CD14-positive monocyte (primary cell): ENCODE measurements at regions of chr7 and their contacts with region 1.

Region 1: GRCh38 chr7:139645572-139646523 is 122.4 kb downstream of the CLEC2L start:
- DNase-seq: peak; percentile 73 to 88 (median 85)
- H3K4me3 ChIP-seq: no peak overlapping the region
- H3K4me3 Mint-ChIP-seq: peak overlapping the region in 1 of 2 donors; percentile 35
- H3K27ac ChIP-seq: peak overlapping the region in 1 of 2 donors; percentile 12
- H3K27ac Mint-ChIP-seq: peak overlapping the region in 3 of 7 donors; percentile 15 to 78 (median 23)
- H3K4me1 ChIP-seq: peaks cover 55 to 61% of the 10 kb centered on the region in 2 donors
- H3K4me1 Mint-ChIP-seq: peaks cover 64% of the 10 kb centered on the region
- H3K27me3 ChIP-seq: no peaks in the 10 kb centered on the region
- H3K27me3 Mint-ChIP-seq: peaks cover 0 to 3% (median 0%) of the 10 kb centered on the region in 3 donors
- CTCF ChIP-seq: peak; percentile 92

Region 2: GRCh38 chr7:138935465-138936011 is 710.3 kb before region 1 on chr7:
- intact Hi-C with region 1: no loop called
- DNase-seq: no peak
- H3K4me3 ChIP-seq: no peak overlapping the region
- H3K4me3 Mint-ChIP-seq: no peak overlapping the region
- H3K27ac ChIP-seq: no peak overlapping the region
- H3K27ac Mint-ChIP-seq: no peak overlapping the region
- H3K4me1 ChIP-seq: no peaks in the 10 kb centered on the region
- H3K4me1 Mint-ChIP-seq: no peaks in the 10 kb centered on the region
- H3K27me3 ChIP-seq: no peaks in the 10 kb centered on the region
- H3K27me3 Mint-ChIP-seq: peaks cover 0 to 2% (median 1%) of the 10 kb centered on the region in 3 donors
- CTCF ChIP-seq: no peak

Region 3: DNA sequence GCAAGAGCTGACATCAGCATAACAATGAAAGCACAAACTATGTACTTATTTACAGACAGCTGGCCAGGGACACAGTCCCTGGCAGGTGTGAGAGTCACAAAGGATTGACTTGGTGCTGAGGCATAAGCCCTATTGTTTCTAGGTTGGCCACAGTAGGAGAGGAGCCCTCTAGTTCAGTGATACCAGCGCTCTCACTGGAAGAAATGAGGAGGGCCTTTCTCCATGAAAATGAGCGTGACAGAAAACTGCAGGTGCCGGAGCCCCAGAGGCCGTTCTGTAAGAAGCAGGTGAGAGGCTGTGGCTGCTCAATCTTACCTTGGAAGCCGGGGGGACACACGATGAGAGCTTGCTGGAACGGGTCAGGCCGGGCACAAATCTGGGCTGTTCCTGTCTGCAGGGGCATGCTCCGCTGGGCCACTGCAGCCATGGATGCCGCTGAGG is 31.9 kb before region 1 on chr7:
- intact Hi-C with region 1: no loop called
- DNase-seq: no peak
- H3K4me3 ChIP-seq: no peak overlapping the region
- H3K4me3 Mint-ChIP-seq: no peak overlapping the region
- H3K27ac ChIP-seq: no peak overlapping the region
- H3K27ac Mint-ChIP-seq: no peak overlapping the region
- H3K4me1 ChIP-seq: no peaks in the 10 kb centered on the region
- H3K4me1 Mint-ChIP-seq: no peaks in the 10 kb centered on the region
- H3K27me3 ChIP-seq: no peaks in the 10 kb centered on the region
- H3K27me3 Mint-ChIP-seq: no peaks in the 10 kb centered on the region
- CTCF ChIP-seq: no peak

Region 4: GRCh38 chr7:139702811-139703486 is 57.1 kb after region 1 on chr7:
- intact Hi-C with region 1: loop called in 1 of 2 experiments (anchors 10 kb)
- DNase-seq: peak; percentile 40 to 50 (median 42)
- H3K4me3 ChIP-seq: no peak overlapping the region
- H3K4me3 Mint-ChIP-seq: peak overlapping the region in 1 of 2 donors; percentile 18
- H3K27ac ChIP-seq: peak overlapping the region in 1 of 2 donors; percentile 54
- H3K27ac Mint-ChIP-seq: peak overlapping the region in 6 of 7 donors; percentile 44 to 75 (median 65)
- H3K4me1 ChIP-seq: peaks cover 10 to 34% of the 10 kb centered on the region in 2 donors
- H3K4me1 Mint-ChIP-seq: peaks cover 18% of the 10 kb centered on the region
- H3K27me3 ChIP-seq: no peaks in the 10 kb centered on the region
- H3K27me3 Mint-ChIP-seq: peaks cover 0 to 5% (median 3%) of the 10 kb centered on the region in 3 donors
- CTCF ChIP-seq: peak; percentile 30

Region 5: DNA sequence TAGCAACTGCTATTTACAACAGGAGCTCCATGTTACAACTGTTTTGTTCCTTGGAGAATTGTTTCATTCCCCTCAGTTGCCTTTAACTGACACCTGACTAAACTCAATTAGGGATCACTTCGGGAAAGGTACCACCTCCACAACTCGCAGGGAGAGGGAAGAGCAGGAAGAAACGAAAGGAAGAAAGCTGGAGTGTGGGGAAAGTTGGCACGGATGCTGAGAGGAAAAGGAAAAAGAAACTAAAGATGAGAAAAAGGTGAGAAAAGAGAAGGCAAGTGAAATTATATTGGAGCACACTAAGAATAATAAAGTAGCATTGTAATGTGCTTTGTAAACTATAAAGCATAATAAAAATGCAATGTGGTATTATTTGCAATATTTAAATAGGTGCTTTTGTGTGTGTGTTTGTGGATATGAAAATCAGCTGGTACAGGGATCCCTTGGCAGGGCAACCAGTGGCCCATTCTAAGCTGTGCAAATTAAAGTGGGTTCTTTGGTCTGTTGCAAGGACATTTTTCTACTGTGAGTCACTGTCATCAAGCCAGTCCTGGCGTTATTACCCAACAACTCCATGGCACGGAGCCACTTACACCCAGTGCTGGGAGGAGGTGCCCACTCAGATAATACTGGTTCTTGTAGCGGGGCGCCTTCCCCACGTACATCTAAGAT is 86.1 kb after region 1 on chr7:
- intact Hi-C with region 1: loop called (anchors 5 to 10 kb)
- DNase-seq: peak; percentile 93 to 97 (median 94)
- H3K4me3 ChIP-seq: peak overlapping the region in 1 of 3 experiments; percentile 38
- H3K4me3 Mint-ChIP-seq: peak overlapping the region; percentile 63 to 72
- H3K27ac ChIP-seq: peak overlapping the region; percentile 88 to 93
- H3K27ac Mint-ChIP-seq: peak overlapping the region; percentile 89 to 100 (median 99)
- H3K4me1 ChIP-seq: peaks cover 64 to 81% of the 10 kb centered on the region in 2 donors
- H3K4me1 Mint-ChIP-seq: peaks cover 81% of the 10 kb centered on the region
- H3K27me3 ChIP-seq: no peaks in the 10 kb centered on the region
- H3K27me3 Mint-ChIP-seq: peaks cover 0 to 3% (median 0%) of the 10 kb centered on the region in 3 donors
- CTCF ChIP-seq: no peak

Region 6: GRCh38 chr7:139777948-139778841 is 132.3 kb after region 1 on chr7 and contains the start of gene HIPK2:
- intact Hi-C with region 1: loop called (anchors 5 kb)
- DNase-seq: peak; percentile 32 to 46 (median 42)
- H3K4me3 ChIP-seq: peak within 1 kb of the TSS; percentile 77 to 90 (median 89)
- H3K4me3 Mint-ChIP-seq: peak within 1 kb of the TSS; percentile 99 to 100
- H3K27ac ChIP-seq: peak within 1 kb of the TSS; percentile 86 to 94
- H3K27ac Mint-ChIP-seq: peak within 1 kb of the TSS; percentile 90 to 99 (median 97)
- H3K4me1 ChIP-seq: peaks cover 30 to 38% of the 10 kb centered on the region in 2 donors
- H3K4me1 Mint-ChIP-seq: peaks cover 37% of the 10 kb centered on the region
- H3K27me3 ChIP-seq: peaks cover 12 to 15% of the 10 kb centered on the region in 2 donors
- H3K27me3 Mint-ChIP-seq: peaks cover 19 to 22% (median 21%) of the 10 kb centered on the region in 3 donors
- CTCF ChIP-seq: no peak
- polyA plus RNA-seq, gene HIPK2: 1.6 to 12.1 (median 3.0) TPM

Region 7: GRCh38 chr7:139901056-139901795 is 255.4 kb after region 1 on chr7:
- intact Hi-C with region 1: loop called in 1 of 2 experiments (anchors 5 kb)
- DNase-seq: peak; percentile 61 to 88 (median 86)
- H3K4me3 ChIP-seq: peak overlapping the region in 2 of 3 experiments; percentile 19 to 50
- H3K4me3 Mint-ChIP-seq: peak overlapping the region; percentile 54 to 60
- H3K27ac ChIP-seq: peak overlapping the region; percentile 97 to 99
- H3K27ac Mint-ChIP-seq: peak overlapping the region; percentile 90 to 97 (median 95)
- H3K4me1 ChIP-seq: peaks cover 63 to 68% of the 10 kb centered on the region in 2 donors
- H3K4me1 Mint-ChIP-seq: peaks cover 76% of the 10 kb centered on the region
- H3K27me3 ChIP-seq: no peaks in the 10 kb centered on the region
- H3K27me3 Mint-ChIP-seq: peaks cover 0 to 6% (median 0%) of the 10 kb centered on the region in 3 donors
- CTCF ChIP-seq: no peak

Region 8: DNA sequence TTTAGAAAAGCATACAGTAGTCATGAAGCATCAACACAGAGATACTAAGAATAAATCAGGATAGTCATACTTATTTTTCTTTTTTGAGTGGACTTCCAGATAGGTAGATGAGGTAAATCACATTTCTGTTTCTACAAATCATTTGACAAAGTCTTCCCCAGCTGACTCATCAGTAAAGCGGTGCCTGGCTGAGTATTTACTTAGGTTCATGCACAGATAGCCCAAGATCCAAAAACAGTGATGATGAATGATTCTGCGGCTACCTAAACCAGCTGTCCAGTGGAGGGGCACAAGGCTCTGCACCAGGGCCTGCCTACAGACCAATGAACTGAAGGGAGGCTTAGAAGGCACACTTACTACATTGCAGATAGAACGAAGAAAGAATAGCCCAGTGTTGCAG is 303.8 kb after region 1 on chr7:
- intact Hi-C with region 1: loop called in 1 of 2 experiments (anchors 5 kb)
- DNase-seq: no peak
- H3K4me3 ChIP-seq: no peak overlapping the region
- H3K4me3 Mint-ChIP-seq: no peak overlapping the region
- H3K27ac ChIP-seq: no peak overlapping the region
- H3K27ac Mint-ChIP-seq: no peak overlapping the region
- H3K4me1 ChIP-seq: peaks cover 5 to 8% of the 10 kb centered on the region in 2 donors
- H3K4me1 Mint-ChIP-seq: peaks cover 13% of the 10 kb centered on the region
- H3K27me3 ChIP-seq: no peaks in the 10 kb centered on the region
- H3K27me3 Mint-ChIP-seq: no peaks in the 10 kb centered on the region
- CTCF ChIP-seq: no peak